GM12878 (cell line): ENCODE measurements at regions of chr1 and their contacts with region 1.

Region 1: GRCh38 chr1:247487057-247487456 is 29.2 kb upstream of the OR2B11 start:
- DNase-seq: peak; percentile 28
- ATAC-seq: peak; percentile 97
- H3K4me3 ChIP-seq: no peak overlapping the region
- H3K27ac ChIP-seq: no peak overlapping the region
- H3K4me1 ChIP-seq: no peaks in the 10 kb centered on the region
- H3K27me3 ChIP-seq: peaks cover 0 to under 1% of the 10 kb centered on the region in 2 experiments; a peak in 2 of 4 replicates
- CTCF ChIP-seq: peak; percentile 58 to 79 (median 65)
- EP300 ChIP-seq: no peak
- POLR2A ChIP-seq: no peak
- RAD21 ChIP-seq: peak; percentile 99

Region 2: GRCh38 chr1:246971090-246971721 is 515.9 kb before region 1 on chr1:
- CTCF ChIA-PET with region 1: interaction called, 7 read pairs
- POLR2A ChIA-PET with region 1: no interaction called
- RAD21 ChIA-PET with region 1: no interaction called
- SMC1A ChIA-PET with region 1: interaction called, 3 read pairs
- in situ Hi-C with region 1: no loop called
- intact Hi-C with region 1: loop called (anchors 2 kb)
- DNase-seq: no peak
- ATAC-seq: peak; percentile 60; the same call in 2 of the 3 replicates
- H3K4me3 ChIP-seq: no peak overlapping the region
- H3K27ac ChIP-seq: no peak overlapping the region
- H3K4me1 ChIP-seq: no peaks in the 10 kb centered on the region
- H3K27me3 ChIP-seq: no peaks in the 10 kb centered on the region
- CTCF ChIP-seq: peak; percentile 62 to 91 (median 65)
- EP300 ChIP-seq: no peak
- POLR2A ChIP-seq: no peak
- RAD21 ChIP-seq: peak; percentile 92

Region 3: GRCh38 chr1:247228133-247228532 is 258.9 kb before region 1 on chr1:
- CTCF ChIA-PET with region 1: no interaction called
- POLR2A ChIA-PET with region 1: no interaction called
- RAD21 ChIA-PET with region 1: no interaction called
- SMC1A ChIA-PET with region 1: no interaction called
- in situ Hi-C with region 1: no loop called
- intact Hi-C with region 1: no loop called
- DNase-seq: no peak
- ATAC-seq: no peak; the same call in 2 of the 3 replicates
- H3K4me3 ChIP-seq: no peak overlapping the region
- H3K27ac ChIP-seq: no peak overlapping the region
- H3K4me1 ChIP-seq: no peaks in the 10 kb centered on the region
- H3K27me3 ChIP-seq: no peaks in the 10 kb centered on the region
- CTCF ChIP-seq: no peak
- EP300 ChIP-seq: no peak
- POLR2A ChIP-seq: no peak
- RAD21 ChIP-seq: no peak

Region 4: DNA sequence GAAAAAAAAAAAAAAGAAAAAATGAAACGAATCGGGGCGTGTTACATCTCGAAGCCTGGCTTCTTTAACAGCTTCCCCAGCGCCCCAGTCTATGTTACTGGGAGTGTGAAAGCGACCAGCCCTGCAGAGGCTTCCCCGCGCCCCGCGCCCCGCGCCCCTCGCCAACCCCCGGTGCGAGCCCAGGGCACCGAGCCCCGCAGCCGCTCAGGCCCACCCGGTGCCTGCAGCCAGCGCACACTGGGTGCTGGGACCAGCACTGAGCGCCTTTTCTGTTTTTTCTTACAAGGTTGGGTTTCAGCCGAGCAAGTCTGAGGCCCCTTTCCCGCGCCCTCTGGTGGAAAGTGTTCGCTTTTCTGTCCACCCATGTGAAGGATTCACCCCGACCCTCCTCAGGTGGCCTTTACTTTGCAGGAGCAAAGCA is 113.3 kb before region 1 on chr1:
- CTCF ChIA-PET with region 1: interaction called, 120 read pairs
- POLR2A ChIA-PET with region 1: interaction called, 3 read pairs
- RAD21 ChIA-PET with region 1: interaction called, 72 read pairs
- SMC1A ChIA-PET with region 1: interaction called, 72 read pairs
- in situ Hi-C with region 1: no loop called
- intact Hi-C with region 1: loop called (anchors 1 kb)
- DNase-seq: no peak
- ATAC-seq: peak; percentile 94
- H3K4me3 ChIP-seq: no peak overlapping the region
- H3K27ac ChIP-seq: no peak overlapping the region
- H3K4me1 ChIP-seq: no peaks in the 10 kb centered on the region
- H3K27me3 ChIP-seq: no peaks in the 10 kb centered on the region
- CTCF ChIP-seq: peak; percentile 29 to 62 (median 51); a peak in 5 of 6 replicates
- EP300 ChIP-seq: no peak
- POLR2A ChIP-seq: no peak
- RAD21 ChIP-seq: 0 out of 2 replicates have a peak, but pooled peaks have one; percentile 15

Region 5: DNA sequence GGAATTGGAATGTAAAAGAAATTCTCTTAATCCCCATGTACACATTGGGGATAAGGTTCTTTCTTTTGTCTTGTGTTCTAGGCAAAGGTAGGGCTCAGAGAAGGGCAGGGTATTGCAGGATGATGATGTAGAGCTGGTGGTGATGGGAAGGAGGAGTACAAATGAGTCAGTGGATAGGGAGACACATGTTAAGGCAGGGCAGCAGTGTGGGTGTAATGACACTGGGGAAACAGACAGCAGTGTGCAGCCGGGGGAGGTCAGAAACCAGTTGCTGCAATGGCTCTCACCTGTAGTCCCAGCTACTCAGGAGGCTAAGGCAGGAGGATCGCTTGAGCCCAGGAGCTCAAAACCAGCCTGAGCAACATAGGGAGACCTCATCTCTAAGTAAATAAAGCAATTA is 66.0 kb before region 1 on chr1:
- CTCF ChIA-PET with region 1: interaction called, 13 read pairs
- POLR2A ChIA-PET with region 1: no interaction called
- RAD21 ChIA-PET with region 1: interaction called, 8 read pairs
- SMC1A ChIA-PET with region 1: interaction called, 22 read pairs
- in situ Hi-C with region 1: no loop called
- intact Hi-C with region 1: no loop called
- DNase-seq: no peak
- ATAC-seq: peak; percentile 70
- H3K4me3 ChIP-seq: no peak overlapping the region
- H3K27ac ChIP-seq: no peak overlapping the region
- H3K4me1 ChIP-seq: peaks cover 5% of the 10 kb centered on the region
- H3K27me3 ChIP-seq: peaks cover 0 to 8% of the 10 kb centered on the region in 2 experiments; a peak in 2 of 4 replicates
- CTCF ChIP-seq: no peak
- EP300 ChIP-seq: no peak
- POLR2A ChIP-seq: no peak
- RAD21 ChIP-seq: no peak

Region 6: GRCh38 chr1:247440001-247440620 is 46.9 kb before region 1 on chr1:
- CTCF ChIA-PET with region 1: interaction called, 21 read pairs
- POLR2A ChIA-PET with region 1: interaction called, 4 read pairs
- RAD21 ChIA-PET with region 1: interaction called, 10 read pairs
- SMC1A ChIA-PET with region 1: interaction called, 13 read pairs
- in situ Hi-C with region 1: no loop called
- intact Hi-C with region 1: no loop called
- DNase-seq: peak; percentile 81
- ATAC-seq: peak; percentile 96
- H3K4me3 ChIP-seq: no peak overlapping the region; the same call in 1 of the 2 replicates
- H3K27ac ChIP-seq: peak overlapping the region; percentile 63; the same call in 1 of the 2 replicates
- H3K4me1 ChIP-seq: peaks cover 29% of the 10 kb centered on the region
- H3K27me3 ChIP-seq: no peaks in the 10 kb centered on the region; a peak in 1 of 4 replicates
- CTCF ChIP-seq: no peak
- EP300 ChIP-seq: peak; percentile 92 to 95; a peak in 3 of 4 replicates
- POLR2A ChIP-seq: no peak
- RAD21 ChIP-seq: peak; percentile 13; the same call in 1 of the 2 replicates